MCF 10A (cell line): ENCODE measurements at regions of chr11 and their contacts with region 1.

Region 1: GRCh38 chr11:2377511-2378443 is 667 bp downstream of the CD81 start:
- DNase-seq: peak; percentile 51
- H3K4me3 Mint-ChIP-seq: peak overlapping the region; percentile 79
- H3K27ac Mint-ChIP-seq: peak overlapping the region; percentile 70
- H3K4me1 Mint-ChIP-seq: peaks cover 18% of the 10 kb centered on the region
- H3K27me3 Mint-ChIP-seq: no peaks in the 10 kb centered on the region
- CTCF ChIP-seq: no peak

Region 2: GRCh38 chr11:1983601-1983961 is 394.2 kb before region 1 on chr11:
- CTCF ChIA-PET with region 1: no interaction called
- POLR2A ChIA-PET with region 1: no interaction called
- intact Hi-C with region 1: no loop called
- DNase-seq: no peak
- H3K4me3 Mint-ChIP-seq: no peak overlapping the region
- H3K27ac Mint-ChIP-seq: no peak overlapping the region
- H3K4me1 Mint-ChIP-seq: no peaks in the 10 kb centered on the region
- H3K27me3 Mint-ChIP-seq: no peaks in the 10 kb centered on the region
- CTCF ChIP-seq: no peak

Region 3: DNA sequence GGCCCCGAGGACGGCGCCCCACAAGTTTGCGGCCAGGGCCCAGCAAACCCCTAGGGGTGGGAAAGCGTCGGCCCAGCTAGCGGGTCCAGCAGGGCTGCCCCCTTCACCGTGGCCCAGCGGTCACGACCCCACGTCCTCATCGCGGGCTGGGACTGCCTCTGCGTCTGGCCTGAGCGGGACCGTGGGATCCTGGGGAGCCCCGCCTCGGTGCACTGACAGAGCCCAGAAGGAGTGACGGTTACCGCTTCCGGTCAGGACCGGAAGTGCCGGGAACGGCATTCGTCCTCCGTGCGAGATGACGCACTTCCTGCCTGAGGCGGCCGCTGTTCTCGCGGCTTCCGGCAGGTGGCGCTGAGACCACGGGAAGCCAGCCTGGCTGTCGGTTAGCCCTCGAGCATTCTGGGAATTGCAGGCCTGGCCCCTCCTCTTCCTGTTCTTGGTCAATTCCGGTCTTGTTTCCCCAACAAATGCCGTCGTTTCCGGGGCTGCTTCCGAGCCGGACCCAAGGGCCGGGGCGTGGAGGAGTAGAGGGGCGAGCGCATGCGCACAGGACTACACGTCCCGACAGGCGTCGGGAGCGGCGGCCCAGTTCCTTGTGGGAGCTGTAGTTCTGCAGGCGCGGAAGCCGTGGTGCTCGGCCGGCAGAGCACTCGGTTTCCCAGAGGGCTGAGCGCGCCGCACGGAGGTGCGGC is 22.4 kb after region 1 on chr11 and contains the start of gene TSSC4:
- CTCF ChIA-PET with region 1: interaction called, 3 read pairs
- POLR2A ChIA-PET with region 1: interaction called, 30 read pairs
- intact Hi-C with region 1: no loop called
- DNase-seq: peak; percentile 100
- H3K4me3 Mint-ChIP-seq: peak within 1 kb of the TSS; percentile 86
- H3K27ac Mint-ChIP-seq: peak within 1 kb of the TSS; percentile 94
- H3K4me1 Mint-ChIP-seq: no peaks in the 10 kb centered on the region
- H3K27me3 Mint-ChIP-seq: no peaks in the 10 kb centered on the region
- CTCF ChIP-seq: peak; percentile 95
- total RNA-seq, gene TSSC4: 69.9 and 70.3 TPM in 2 replicates

Region 4: DNA sequence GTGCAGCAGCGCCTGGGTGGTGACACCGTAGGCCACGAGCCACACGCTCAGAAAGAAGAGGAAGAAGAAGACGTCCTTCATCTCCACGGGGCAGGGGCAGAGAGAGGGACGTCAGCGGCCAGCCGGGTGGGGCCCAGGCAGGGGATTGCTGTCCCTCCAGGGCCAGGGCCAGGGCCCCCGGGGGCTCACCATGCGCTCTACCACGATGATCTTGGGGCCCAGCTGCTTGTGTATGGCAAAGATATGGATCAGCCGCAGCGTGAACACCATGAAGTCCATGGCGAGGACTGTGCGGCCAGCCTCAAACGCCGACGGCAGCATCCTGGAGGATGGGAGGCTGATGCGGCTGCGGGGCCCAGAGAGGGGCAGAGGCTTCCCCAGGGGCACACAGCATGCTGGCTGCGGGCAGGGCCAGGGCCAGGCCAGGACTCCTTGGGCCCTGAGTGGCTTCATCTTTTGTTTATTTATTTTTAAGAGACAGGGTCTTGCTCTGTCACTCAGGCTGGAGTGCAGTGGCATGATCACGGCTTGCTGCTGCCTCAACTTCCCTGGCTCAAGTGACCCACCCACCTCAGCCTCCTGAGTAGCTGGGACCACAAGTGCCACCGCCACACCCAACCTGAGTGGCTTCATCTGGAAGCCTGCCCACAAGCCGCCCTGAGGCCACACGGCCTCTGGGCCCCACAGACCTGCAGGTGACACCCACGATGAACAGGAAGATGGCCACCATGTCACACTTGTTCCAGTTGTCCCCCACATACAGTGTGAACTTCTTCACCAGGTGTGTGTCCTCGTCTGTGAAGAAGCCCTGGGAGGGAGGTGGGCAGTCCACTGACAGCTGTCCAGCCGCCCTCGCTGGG is 33.9 kb after region 1 on chr11:
- CTCF ChIA-PET with region 1: no interaction called
- POLR2A ChIA-PET with region 1: no interaction called
- intact Hi-C with region 1: no loop called
- DNase-seq: no peak
- H3K4me3 Mint-ChIP-seq: no peak overlapping the region
- H3K27ac Mint-ChIP-seq: no peak overlapping the region
- H3K4me1 Mint-ChIP-seq: no peaks in the 10 kb centered on the region
- H3K27me3 Mint-ChIP-seq: no peaks in the 10 kb centered on the region
- CTCF ChIP-seq: no peak

Region 5: GRCh38 chr11:2511421-2512369 is 133.9 kb after region 1 on chr11:
- CTCF ChIA-PET with region 1: no interaction called
- POLR2A ChIA-PET with region 1: no interaction called
- intact Hi-C with region 1: no loop called
- DNase-seq: no peak
- H3K4me3 Mint-ChIP-seq: no peak overlapping the region
- H3K27ac Mint-ChIP-seq: no peak overlapping the region
- H3K4me1 Mint-ChIP-seq: no peaks in the 10 kb centered on the region
- H3K27me3 Mint-ChIP-seq: peaks cover 25% of the 10 kb centered on the region
- CTCF ChIP-seq: no peak